Breast epithelium (tissue), 4 donors: ENCODE measurements at regions of chr10 and their contacts with region 1.

Region 1: DNA sequence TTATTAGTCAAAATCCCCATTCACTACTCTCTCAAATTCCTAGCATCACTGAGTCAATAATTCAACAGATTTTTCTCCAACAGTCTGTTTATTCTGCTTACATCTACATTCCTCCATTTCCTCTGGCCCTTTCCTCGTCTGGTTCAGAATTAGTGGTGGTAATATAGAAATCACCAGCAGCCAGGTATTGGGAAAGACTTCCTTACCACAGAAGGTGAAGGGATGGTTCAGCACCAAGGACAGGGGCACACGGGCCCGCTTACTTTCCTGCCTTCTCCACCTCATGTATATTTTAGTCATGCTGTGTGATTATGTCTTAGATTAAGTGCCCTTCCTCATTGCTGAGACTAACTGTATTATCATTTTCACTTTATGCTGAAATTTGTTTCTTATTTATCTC is 70.4 kb upstream of the APBB1IP start:
- DNase-seq: no peak
- H3K4me3 ChIP-seq: no peak overlapping the region
- H3K27ac ChIP-seq: no peak overlapping the region
- H3K4me1 ChIP-seq: no peaks in the 10 kb centered on the region
- H3K27me3 ChIP-seq: no peaks in the 10 kb centered on the region
- CTCF ChIP-seq: no peak
- POLR2A ChIP-seq: no peak

Region 2: GRCh38 chr10:26314265-26315013 is 53.3 kb before region 1 on chr10:
- intact Hi-C with region 1: no loop called
- DNase-seq: no peak
- H3K4me3 ChIP-seq: no peak overlapping the region
- H3K27ac ChIP-seq: no peak overlapping the region
- H3K4me1 ChIP-seq: no peaks in the 10 kb centered on the region
- H3K27me3 ChIP-seq: peaks cover 0 to 3% of the 10 kb centered on the region in 2 donors
- CTCF ChIP-seq: no peak
- POLR2A ChIP-seq: no peak

Region 3: GRCh38 chr10:26860443-26861204 is 492.9 kb after region 1 on chr10 and contains the start of gene ABI1:
- intact Hi-C with region 1: loop called (anchors 10 kb)
- DNase-seq: peak; percentile 98
- H3K4me3 ChIP-seq: peak within 1 kb of the TSS; percentile 78 to 99 (median 95)
- H3K27ac ChIP-seq: peak within 1 kb of the TSS; percentile 99 to 100
- H3K4me1 ChIP-seq: no peaks in the 10 kb centered on the region
- H3K27me3 ChIP-seq: no peaks in the 10 kb centered on the region
- CTCF ChIP-seq: no peak
- POLR2A ChIP-seq: peak; percentile 96
- total RNA-seq, gene ABI1: 50.5 to 75.7 (median 56.6) TPM